Right cardiac atrium (tissue), 5 donors: ENCODE measurements at regions of chr5 and their contacts with region 1.

Region 1: GRCh38 chr5:155943516-155944407 is 383.2 kb upstream of the SGCD start:
- DNase-seq: peak; percentile 28 to 72 (median 70)
- ATAC-seq: peak; percentile 75 to 79
- H3K4me3 ChIP-seq: no peak overlapping the region
- H3K27ac ChIP-seq: no peak overlapping the region
- H3K4me1 ChIP-seq: no peaks in the 10 kb centered on the region
- H3K27me3 ChIP-seq: no peaks in the 10 kb centered on the region

Region 2: GRCh38 chr5:156326718-156327259 is 383.0 kb after region 1 on chr5 and contains the start of gene SGCD:
- intact Hi-C with region 1: loop called in 1 of 4 experiments (anchors 10 kb)
- DNase-seq: peak; percentile 86 to 89 (median 88)
- ATAC-seq: peak; percentile 94 to 98
- H3K4me3 ChIP-seq: peak within 1 kb of the TSS; percentile 59
- H3K27ac ChIP-seq: peak within 1 kb of the TSS; percentile 85
- H3K4me1 ChIP-seq: peaks cover 3% of the 10 kb centered on the region
- H3K27me3 ChIP-seq: no peaks in the 10 kb centered on the region
- total RNA-seq, gene SGCD: 73.1 to 151 (median 84.1) TPM

Region 3: GRCh38 chr5:156824800-156825199 is 881.0 kb after region 1 on chr5:
- intact Hi-C with region 1: loop called in 3 of 4 experiments (anchors 2 to 5 kb)
- DNase-seq: no peak
- ATAC-seq: peak; percentile 69 to 78
- H3K4me3 ChIP-seq: no peak overlapping the region
- H3K27ac ChIP-seq: no peak overlapping the region
- H3K4me1 ChIP-seq: peaks cover 2% of the 10 kb centered on the region
- H3K27me3 ChIP-seq: no peaks in the 10 kb centered on the region